CD8-positive, alpha-beta T cell (primary cell): ENCODE measurements at regions of chr3 and their contacts with region 1.

Region 1: GRCh38 chr3:33440323-33441232 is at the start of gene UBP1:
- DNase-seq: peak; percentile 90 to 100 (median 95)
- ATAC-seq: peak; percentile 81
- H3K4me3 ChIP-seq: peak within 1 kb of the TSS; percentile 79 to 81
- H3K4me3 Mint-ChIP-seq: peak within 1 kb of the TSS; percentile 100
- H3K27ac ChIP-seq: peak within 1 kb of the TSS; percentile 94 to 96
- H3K27ac Mint-ChIP-seq: peak within 1 kb of the TSS; percentile 100
- H3K4me1 ChIP-seq: peaks cover 33% of the 10 kb centered on the region
- H3K4me1 Mint-ChIP-seq: peaks cover 48% of the 10 kb centered on the region
- H3K27me3 ChIP-seq: no peaks in the 10 kb centered on the region
- H3K27me3 Mint-ChIP-seq: no peaks in the 10 kb centered on the region
- CTCF ChIP-seq: no peak
- total RNA-seq, gene UBP1: 54.4 to 55.9 TPM

Region 2: DNA sequence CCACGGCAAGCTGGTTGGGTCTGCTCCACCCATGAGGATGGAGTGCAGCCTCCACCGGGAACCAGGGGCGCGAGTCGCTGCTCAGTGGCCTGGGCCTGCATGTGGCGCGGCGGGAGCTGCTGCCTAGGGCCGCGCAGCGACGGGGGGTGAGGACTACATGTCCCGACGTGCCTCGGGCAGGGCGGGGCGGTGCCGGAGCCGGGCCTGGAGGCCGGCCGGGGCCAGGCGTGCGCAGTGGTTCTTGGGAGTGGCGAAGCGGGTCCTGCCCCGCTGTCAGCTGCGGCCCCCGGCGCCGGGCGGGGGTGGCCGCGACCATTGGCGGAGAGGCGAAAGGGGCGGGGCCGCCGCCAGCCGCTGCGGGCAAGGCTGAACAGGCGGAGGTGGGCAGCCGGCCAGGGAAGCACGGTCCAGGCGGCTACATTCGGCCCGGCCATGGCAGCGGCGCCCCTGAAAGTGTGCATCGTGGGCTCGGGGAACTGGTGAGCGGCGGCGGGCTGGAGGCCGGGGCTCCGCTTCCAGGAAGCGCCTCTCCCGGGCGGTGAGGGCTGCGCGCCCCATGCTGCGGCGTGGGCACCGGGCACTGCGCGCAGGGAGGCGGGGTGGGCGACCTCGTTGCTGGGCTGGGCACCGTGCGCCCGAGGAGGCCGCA is 1334.2 kb before region 1 on chr3 and contains the start of gene GPD1L:
- CTCF ChIA-PET with region 1: no interaction called
- POLR2A ChIA-PET with region 1: no interaction called
- intact Hi-C with region 1: loop called in 1 of 2 experiments (anchors 5 kb)
- DNase-seq: peak; percentile 84 to 95 (median 90)
- ATAC-seq: peak; percentile 97
- H3K4me3 ChIP-seq: peak within 1 kb of the TSS; percentile 70 to 80
- H3K4me3 Mint-ChIP-seq: peak within 1 kb of the TSS; percentile 91
- H3K27ac ChIP-seq: peak within 1 kb of the TSS; percentile 46 to 57
- H3K27ac Mint-ChIP-seq: peak within 1 kb of the TSS; percentile 67
- H3K4me1 ChIP-seq: peaks cover 13% of the 10 kb centered on the region
- H3K4me1 Mint-ChIP-seq: peaks cover 33% of the 10 kb centered on the region
- H3K27me3 ChIP-seq: no peaks in the 10 kb centered on the region
- H3K27me3 Mint-ChIP-seq: no peaks in the 10 kb centered on the region
- CTCF ChIP-seq: no peak
- total RNA-seq, gene GPD1L: 9.5 to 9.8 TPM

Region 3: GRCh38 chr3:33113772-33114621 is 326.6 kb before region 1 on chr3 and contains the start of gene CRTAP:
- CTCF ChIA-PET with region 1: interaction called, 3 read pairs
- POLR2A ChIA-PET with region 1: interaction called, 6 read pairs
- intact Hi-C with region 1: loop called in 1 of 2 experiments (anchors 1 kb)
- DNase-seq: peak; percentile 70 to 95 (median 87)
- ATAC-seq: peak; percentile 87
- H3K4me3 ChIP-seq: peak within 1 kb of the TSS; percentile 60 to 80
- H3K4me3 Mint-ChIP-seq: peak within 1 kb of the TSS; percentile 91
- H3K27ac ChIP-seq: peak within 1 kb of the TSS; percentile 41 to 80
- H3K27ac Mint-ChIP-seq: peak within 1 kb of the TSS; percentile 89
- H3K4me1 ChIP-seq: peaks cover 7% of the 10 kb centered on the region
- H3K4me1 Mint-ChIP-seq: peaks cover 36% of the 10 kb centered on the region
- H3K27me3 ChIP-seq: no peaks in the 10 kb centered on the region
- H3K27me3 Mint-ChIP-seq: no peaks in the 10 kb centered on the region
- CTCF ChIP-seq: no peak
- total RNA-seq, gene CRTAP: 21.7 to 23.5 TPM

Region 4: DNA sequence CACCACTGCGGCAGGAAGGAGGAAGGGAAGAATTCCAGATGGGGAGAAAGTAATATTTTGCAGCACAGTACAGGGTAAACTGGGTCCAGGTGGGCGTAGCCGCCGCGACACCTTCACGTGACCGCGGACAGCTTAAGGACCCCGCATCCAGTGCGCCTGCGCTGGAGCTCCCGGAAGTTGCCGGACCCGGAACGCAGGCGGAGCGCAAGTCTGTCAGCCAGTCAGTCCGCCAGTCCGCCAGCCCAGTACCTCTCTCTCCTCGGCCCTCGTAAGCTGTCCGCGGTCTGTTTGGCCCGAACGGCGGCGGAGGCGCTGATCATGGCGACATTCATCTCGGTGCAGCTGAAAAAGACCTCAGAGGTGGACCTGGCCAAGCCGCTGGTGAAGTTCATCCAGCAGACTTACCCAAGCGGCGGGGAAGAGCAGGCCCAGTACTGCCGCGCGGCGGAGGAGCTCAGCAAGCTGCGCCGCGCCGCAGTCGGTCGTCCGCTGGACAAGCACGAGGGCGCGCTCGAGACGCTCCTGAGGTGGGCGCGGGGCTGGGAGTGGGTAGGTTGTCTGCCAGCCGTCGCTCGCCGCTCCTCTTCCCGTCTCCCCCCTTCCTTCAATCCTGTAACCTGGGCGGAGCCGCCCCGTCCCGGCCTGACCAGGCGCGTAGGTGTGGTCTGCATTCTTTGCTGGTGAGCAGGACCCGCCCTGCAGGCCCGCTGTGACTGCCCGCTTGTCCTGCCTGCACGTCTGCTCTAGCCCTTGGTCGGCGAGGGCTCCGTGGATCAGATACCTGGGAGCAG is 358.0 kb after region 1 on chr3 and contains the start of gene PDCD6IP:
- CTCF ChIA-PET with region 1: interaction called, 8 read pairs
- POLR2A ChIA-PET with region 1: interaction called, 17 read pairs
- intact Hi-C with region 1: loop called (anchors 1 to 5 kb)
- DNase-seq: peak; percentile 76 to 94 (median 86)
- ATAC-seq: peak; percentile 76
- H3K4me3 ChIP-seq: peak within 1 kb of the TSS; percentile 76 to 96
- H3K4me3 Mint-ChIP-seq: peak within 1 kb of the TSS; percentile 97
- H3K27ac ChIP-seq: peak within 1 kb of the TSS; percentile 74 to 90
- H3K27ac Mint-ChIP-seq: peak within 1 kb of the TSS; percentile 98
- H3K4me1 ChIP-seq: peaks cover 32% of the 10 kb centered on the region
- H3K4me1 Mint-ChIP-seq: peaks cover 53% of the 10 kb centered on the region
- H3K27me3 ChIP-seq: no peaks in the 10 kb centered on the region
- H3K27me3 Mint-ChIP-seq: no peaks in the 10 kb centered on the region
- CTCF ChIP-seq: no peak
- total RNA-seq, gene PDCD6IP: 84.7 to 92.4 TPM